ENCODE measurements at regions of chr9 and their contacts with region 1.

Region 1: DNA sequence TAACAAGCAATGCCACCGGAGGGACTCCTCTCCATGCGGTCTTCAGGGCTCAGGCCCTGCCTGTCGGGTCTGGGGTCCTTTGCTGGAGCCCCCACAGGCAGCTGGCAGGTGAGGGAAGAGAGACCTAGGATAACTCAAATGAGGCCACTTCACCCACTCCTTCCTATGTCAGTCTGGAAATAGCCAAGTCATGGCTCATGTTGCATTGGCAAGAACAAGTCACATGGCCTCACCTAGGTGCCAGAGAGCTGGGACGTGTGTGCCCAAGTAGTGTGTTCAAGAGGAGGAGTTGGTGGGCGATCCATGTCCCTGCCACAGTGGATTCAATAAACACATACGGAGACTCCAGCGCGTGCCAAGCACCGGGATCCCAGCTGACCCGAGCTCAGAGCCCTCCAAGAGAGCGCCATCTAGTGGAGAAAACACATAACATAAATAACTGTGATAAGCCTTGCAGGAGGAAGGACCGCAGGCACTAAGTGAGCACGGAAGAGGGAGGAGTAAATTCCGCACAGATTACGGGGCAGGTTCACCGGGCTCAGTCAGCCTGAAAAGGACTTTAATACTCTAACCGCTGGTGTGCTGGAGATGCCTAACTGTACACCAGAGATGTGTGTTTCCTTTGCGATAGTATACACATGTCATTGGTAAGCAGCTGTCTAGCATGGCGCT is 580.8 kb downstream of the CCDC171 start:
- DNase-seq: peak; percentile 89
- H3K4me3 Mint-ChIP-seq: no peak overlapping the region
- H3K27ac Mint-ChIP-seq: no peak overlapping the region
- H3K4me1 Mint-ChIP-seq: peaks cover 11% of the 10 kb centered on the region
- H3K27me3 Mint-ChIP-seq: no peaks in the 10 kb centered on the region
- CTCF ChIP-seq: peak; percentile 72

Region 2: DNA sequence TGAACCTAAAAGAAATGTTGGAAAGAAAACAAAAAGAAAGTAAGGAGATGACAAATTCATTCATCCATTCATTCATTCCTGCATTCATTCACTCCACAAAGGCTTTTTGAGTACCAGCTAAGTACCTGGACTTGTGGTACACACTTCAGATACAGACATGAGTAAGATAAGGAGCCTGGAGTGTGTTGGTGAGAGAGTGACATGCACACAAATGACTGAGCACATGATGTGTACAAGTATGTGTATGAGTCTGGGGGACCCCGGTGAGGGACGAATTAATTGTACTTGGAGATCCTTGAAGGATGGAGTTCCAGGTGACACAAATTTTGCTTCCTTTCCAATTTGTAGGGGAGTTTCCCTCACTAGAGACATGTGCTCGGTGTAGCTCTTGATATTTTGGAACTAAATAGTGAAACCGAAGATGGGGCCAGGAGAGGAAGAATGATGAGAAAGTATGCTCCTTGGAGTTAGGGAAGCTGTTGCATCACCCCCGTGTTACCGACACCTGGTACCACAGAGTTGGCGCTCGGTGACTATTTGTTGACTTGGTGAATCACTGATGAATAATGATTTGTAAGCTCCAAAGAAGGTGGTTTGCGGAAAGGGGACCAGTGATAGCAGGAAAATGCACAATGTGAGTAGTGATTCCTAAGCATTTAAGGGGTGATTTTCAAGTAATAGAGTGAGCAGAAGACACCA is 71.0 kb before region 1 on chr9:
- CTCF ChIA-PET with region 1: interaction called, 10 read pairs
- POLR2A ChIA-PET with region 1: no interaction called
- intact Hi-C with region 1: no loop called
- DNase-seq: peak; percentile 97
- H3K4me3 Mint-ChIP-seq: peak overlapping the region; percentile 60
- H3K27ac Mint-ChIP-seq: peak overlapping the region; percentile 67
- H3K4me1 Mint-ChIP-seq: peaks cover 28% of the 10 kb centered on the region
- H3K27me3 Mint-ChIP-seq: no peaks in the 10 kb centered on the region
- CTCF ChIP-seq: no peak

Region 3: GRCh38 chr9:16143947-16144890 is 10.5 kb after region 1 on chr9:
- CTCF ChIA-PET with region 1: interaction called, 13 read pairs
- POLR2A ChIA-PET with region 1: no interaction called
- intact Hi-C with region 1: no loop called
- DNase-seq: peak; percentile 95
- H3K4me3 Mint-ChIP-seq: peak overlapping the region; percentile 50
- H3K27ac Mint-ChIP-seq: peak overlapping the region; percentile 80
- H3K4me1 Mint-ChIP-seq: peaks cover 19% of the 10 kb centered on the region
- H3K27me3 Mint-ChIP-seq: no peaks in the 10 kb centered on the region
- CTCF ChIP-seq: no peak

Region 4: DNA sequence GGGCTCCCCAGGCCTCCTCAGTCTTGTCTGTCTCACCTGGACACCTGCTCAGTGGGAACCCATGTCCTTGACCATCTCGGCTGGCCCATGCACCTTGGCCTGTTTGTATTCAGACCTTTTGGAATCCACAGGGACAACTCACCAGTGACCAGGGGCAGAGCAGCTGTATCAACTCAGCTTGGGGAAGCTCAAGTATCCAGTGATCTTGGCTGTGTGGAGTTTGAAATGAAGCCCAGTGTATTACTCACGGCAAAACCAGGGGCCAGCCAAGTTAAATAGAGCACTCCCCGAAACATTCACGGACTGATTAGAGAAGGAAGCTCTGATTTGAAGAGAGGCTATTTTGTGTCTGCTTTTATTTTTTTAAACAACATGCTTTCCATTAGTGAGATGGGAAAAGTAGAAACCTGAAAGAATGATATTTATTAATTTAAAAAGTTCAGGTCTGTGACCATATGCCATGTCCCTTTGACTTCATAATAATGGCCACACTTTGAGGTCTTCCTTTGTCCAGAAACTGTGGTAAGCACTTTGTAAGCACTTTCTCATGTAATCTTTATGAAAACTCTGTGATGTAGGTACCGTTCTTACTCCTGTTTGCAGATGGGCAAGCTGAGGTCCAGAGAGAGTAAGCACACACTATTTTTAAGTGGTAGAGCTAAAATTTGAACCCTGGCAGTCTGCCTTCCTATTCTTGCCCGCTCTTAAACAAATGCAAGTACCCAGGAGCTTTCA is 80.3 kb after region 1 on chr9:
- CTCF ChIA-PET with region 1: no interaction called
- POLR2A ChIA-PET with region 1: no interaction called
- intact Hi-C with region 1: no loop called
- DNase-seq: peak; percentile 87
- H3K4me3 Mint-ChIP-seq: no peak overlapping the region
- H3K27ac Mint-ChIP-seq: no peak overlapping the region
- H3K4me1 Mint-ChIP-seq: peaks cover 10% of the 10 kb centered on the region
- H3K27me3 Mint-ChIP-seq: no peaks in the 10 kb centered on the region
- CTCF ChIP-seq: no peak

Measured in MCF 10A (cell line).